Posterior vena cava (tissue), 2 donors: ENCODE measurements at regions of chr10 and their contacts with region 1.

Region 1: DNA sequence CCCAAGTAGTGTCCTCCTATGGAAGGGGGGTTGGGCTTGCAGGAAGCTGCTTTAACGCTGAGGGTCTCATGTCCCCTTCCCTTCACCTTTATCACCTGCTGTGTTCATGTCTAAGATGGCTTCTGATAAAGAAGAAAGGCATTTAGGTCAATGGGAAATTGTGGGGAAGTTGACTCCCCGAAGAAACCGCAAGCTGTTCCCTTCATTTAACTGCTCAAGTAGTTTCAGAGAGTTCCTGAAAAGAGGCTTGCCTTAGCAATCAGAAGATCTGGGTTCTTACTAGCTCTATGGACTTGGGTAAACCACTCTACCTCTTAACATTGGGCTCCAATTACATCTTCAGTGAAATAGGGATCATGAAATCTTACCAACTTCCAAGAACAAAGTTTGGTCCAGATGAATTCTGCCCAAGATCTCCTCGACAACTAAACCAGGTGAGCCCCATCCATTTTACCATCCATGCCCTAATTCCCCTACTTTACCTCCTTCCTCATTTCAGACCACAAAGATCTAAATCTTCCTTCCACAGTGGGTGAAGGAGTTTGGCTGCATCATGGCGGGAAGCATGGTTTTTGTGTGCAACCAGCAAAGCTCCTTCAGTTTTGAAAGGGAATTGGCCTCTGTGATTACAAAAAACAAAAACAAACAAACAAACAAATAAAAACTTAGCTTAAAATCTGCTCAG is 30.4 kb upstream of the UCN3 start:
- DNase-seq: no peak

Region 2: GRCh38 chr10:3987143-3987974 is 1347.0 kb before region 1 on chr10:
- intact Hi-C with region 1: no loop called
- DNase-seq: no peak

Region 3: DNA sequence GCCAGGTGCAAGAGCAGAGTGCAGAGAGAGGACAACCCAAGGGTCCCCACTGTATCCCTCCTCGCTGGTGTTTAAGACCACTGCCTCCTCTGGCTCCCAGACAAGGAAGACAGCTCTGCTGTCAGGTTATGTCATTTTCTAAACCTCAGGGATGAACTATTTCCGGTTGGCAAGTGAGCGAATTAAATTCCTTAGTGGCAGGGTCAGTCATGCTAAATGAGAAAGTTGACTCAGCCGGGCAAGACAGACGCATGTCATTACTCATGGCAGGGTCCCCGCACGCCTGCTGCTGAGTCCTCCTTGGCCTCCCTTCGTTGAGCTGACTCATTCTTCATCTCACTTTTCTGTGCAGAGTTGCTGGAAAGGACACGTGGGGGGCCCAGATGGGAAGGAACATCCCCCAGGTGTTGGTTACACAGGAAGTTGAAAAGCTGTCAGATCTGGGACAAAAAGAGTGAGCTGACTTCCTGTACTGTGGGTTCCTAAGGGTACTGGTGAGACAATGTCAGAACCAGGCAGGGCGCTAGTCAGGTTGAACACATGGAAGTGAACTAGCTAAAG is 16.7 kb before region 1 on chr10:
- intact Hi-C with region 1: loop called in 1 of 2 experiments (anchors 1 kb)
- DNase-seq: no peak

Region 4: DNA sequence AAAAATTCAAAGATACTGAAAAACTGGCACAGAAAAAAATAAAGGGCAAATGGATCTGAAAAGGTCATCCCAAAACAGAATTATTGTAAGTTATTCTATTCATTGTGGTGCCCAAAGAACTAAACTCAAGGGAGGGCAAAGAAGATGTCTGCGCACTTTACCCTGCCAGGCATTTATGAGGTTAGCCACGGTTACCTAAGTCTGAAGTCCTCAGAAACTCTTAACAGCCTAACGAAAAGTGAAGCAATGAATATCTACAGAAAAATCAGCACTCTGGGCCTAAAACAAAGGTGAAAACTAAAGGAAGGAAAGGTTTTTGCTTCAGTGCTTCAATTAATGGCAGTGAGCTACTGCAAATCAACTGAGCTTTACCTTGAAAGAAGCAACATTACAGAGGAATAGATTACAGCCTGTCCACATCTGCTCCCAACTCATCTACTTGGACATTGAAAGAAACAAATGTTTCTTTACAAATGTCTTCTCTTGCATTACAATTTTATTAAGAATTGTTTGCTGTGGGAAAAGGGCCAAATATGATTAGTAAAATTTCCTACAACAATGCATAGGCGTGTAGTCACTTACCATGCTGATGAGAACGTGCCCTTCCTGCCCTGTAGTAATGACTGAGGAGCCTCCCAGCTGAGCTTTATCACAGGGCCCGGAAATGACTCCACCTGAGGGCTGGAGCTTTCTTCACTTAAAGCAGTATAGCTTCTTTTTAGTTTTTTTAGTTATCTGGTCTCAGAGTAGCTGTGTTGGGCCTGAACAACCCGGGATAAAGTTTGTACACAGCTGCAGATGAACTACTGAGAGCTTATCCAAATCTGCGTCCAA is 70.1 kb after region 1 on chr10 and contains the start of gene TUBAL3:
- intact Hi-C with region 1: loop called in 1 of 2 experiments (anchors 2 kb)
- DNase-seq: no peak
- total RNA-seq, gene TUBAL3: not detected